Endothelial cell of umbilical vein (primary cell): ENCODE measurements at regions of chr1 and their contacts with region 1.

Region 1: DNA sequence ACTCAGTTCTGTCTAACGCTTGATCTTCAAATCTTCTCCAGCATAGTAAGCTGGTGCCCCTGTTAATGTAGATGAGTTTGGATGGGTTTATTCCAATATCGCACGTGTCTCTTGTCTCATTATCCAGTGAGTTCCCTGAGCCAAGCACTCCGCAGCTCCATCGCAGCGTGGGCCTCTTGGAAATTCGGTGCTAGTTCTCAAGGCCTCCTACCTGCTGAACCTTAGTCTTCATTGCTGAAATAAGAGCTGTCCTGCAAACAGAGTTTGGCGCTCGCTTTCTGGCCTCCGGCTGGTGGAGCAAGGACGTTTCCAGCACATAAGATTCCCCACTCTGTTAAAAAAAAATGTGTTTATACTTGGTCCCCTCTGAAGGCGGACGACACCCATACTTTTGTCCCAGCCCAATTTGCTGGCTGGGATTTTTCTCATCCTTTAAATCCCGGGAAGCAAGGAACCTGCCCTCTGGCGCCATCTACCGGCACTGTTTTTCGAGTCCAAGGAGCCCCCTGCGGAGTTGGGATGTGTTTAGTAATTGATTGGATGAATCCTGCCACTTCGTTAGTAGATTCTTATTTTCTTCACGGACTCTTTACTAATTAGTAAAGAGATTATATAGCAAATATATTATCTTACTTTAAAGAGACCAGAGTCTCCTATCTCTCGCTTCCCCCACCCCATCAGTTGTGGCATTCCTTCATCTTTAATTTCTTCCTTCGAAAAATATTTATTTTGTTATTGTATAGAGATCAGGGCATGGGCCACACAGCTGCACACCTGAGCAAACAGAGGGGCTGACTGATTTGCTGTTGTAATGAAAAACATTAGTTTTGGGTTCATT is 14.7 kb downstream of the JUN start:
- DNase-seq: peak; percentile 74
- H3K4me3 ChIP-seq: no peak overlapping the region
- H3K27ac ChIP-seq: no peak overlapping the region
- H3K4me1 ChIP-seq: peaks cover 34% of the 10 kb centered on the region
- H3K27me3 ChIP-seq: no peaks in the 10 kb centered on the region
- CTCF ChIP-seq: peak; percentile 71 to 81
- POLR2A ChIP-seq: no peak

Region 2: GRCh38 chr1:58515794-58516401 is 253.3 kb before region 1 on chr1:
- CTCF ChIA-PET with region 1: interaction called, 7 read pairs
- POLR2A ChIA-PET with region 1: no interaction called
- dilution Hi-C with region 1: no loop called
- intact Hi-C with region 1: loop called (anchors 1 kb)
- DNase-seq: peak; percentile 71
- H3K4me3 ChIP-seq: no peak overlapping the region
- H3K27ac ChIP-seq: no peak overlapping the region
- H3K4me1 ChIP-seq: no peaks in the 10 kb centered on the region
- H3K27me3 ChIP-seq: no peaks in the 10 kb centered on the region
- CTCF ChIP-seq: peak; percentile 37 to 58
- POLR2A ChIP-seq: no peak

Region 3: GRCh38 chr1:58699011-58699762 is 70.0 kb before region 1 on chr1:
- CTCF ChIA-PET with region 1: no interaction called
- POLR2A ChIA-PET with region 1: no interaction called
- dilution Hi-C with region 1: no loop called
- intact Hi-C with region 1: loop called (anchors 2 kb)
- DNase-seq: peak; percentile 63
- H3K4me3 ChIP-seq: peak overlapping the region; percentile 75 to 92 (median 86)
- H3K27ac ChIP-seq: peak overlapping the region; percentile 89
- H3K4me1 ChIP-seq: peaks cover 8% of the 10 kb centered on the region
- H3K27me3 ChIP-seq: no peaks in the 10 kb centered on the region
- CTCF ChIP-seq: no peak
- POLR2A ChIP-seq: peak; percentile 5

Region 4: GRCh38 chr1:58739856-58740466 is 29.2 kb before region 1 on chr1:
- CTCF ChIA-PET with region 1: interaction called, 48 read pairs
- POLR2A ChIA-PET with region 1: no interaction called
- dilution Hi-C with region 1: no loop called
- intact Hi-C with region 1: loop called (anchors 1 kb)
- DNase-seq: peak; percentile 73
- H3K4me3 ChIP-seq: no peak overlapping the region
- H3K27ac ChIP-seq: no peak overlapping the region
- H3K4me1 ChIP-seq: peaks cover 3% of the 10 kb centered on the region
- H3K27me3 ChIP-seq: no peaks in the 10 kb centered on the region
- CTCF ChIP-seq: peak; percentile 31 to 38
- POLR2A ChIP-seq: no peak

Region 5: GRCh38 chr1:58755468-58755872 is 13.7 kb before region 1 on chr1:
- CTCF ChIA-PET with region 1: interaction called, 31 read pairs
- POLR2A ChIA-PET with region 1: interaction called, 9 read pairs
- dilution Hi-C with region 1: no loop called
- intact Hi-C with region 1: no loop called
- DNase-seq: peak; percentile 99
- H3K4me3 ChIP-seq: peak overlapping the region in 1 of 3 experiments; percentile 18
- H3K27ac ChIP-seq: peak overlapping the region; percentile 96
- H3K4me1 ChIP-seq: peaks cover 40% of the 10 kb centered on the region
- H3K27me3 ChIP-seq: no peaks in the 10 kb centered on the region
- CTCF ChIP-seq: no peak
- POLR2A ChIP-seq: no peak

Region 6: DNA sequence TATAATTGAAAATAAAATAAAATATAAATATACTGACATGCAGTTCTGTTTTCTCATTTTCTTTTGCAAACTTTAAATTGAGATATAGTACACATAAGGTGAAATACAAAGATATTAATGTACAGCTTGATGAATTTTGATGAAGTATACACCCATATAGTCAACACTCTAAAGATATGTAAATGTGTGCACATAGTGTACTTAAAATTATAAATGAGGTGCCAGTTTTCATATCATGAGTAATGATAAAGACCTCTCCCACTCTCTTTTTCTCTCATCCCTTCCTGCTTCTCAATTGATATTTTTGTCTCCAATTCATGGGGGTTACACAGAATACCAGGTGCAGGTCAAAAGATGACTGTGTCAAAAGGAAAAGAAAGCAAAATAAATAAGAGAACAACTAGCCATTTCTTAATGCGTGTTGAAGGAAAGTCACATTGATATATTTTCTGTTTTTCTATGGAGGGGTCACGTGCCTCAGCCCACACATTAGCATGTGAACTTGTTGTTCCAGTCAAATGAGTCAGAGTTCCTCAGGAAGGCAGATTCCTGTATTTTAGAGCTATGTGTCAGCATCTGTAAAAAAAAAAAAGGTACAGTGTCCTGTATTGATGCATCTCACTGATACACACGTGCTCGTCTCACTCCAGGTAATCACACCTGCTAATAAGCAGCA is 981.3 kb after region 1 on chr1:
- CTCF ChIA-PET with region 1: interaction called, 4 read pairs
- POLR2A ChIA-PET with region 1: interaction called, 5 read pairs
- dilution Hi-C with region 1: no loop called
- intact Hi-C with region 1: loop called (anchors 2 kb)
- DNase-seq: peak; percentile 97
- H3K4me3 ChIP-seq: peak overlapping the region in 1 of 3 experiments; percentile 19
- H3K27ac ChIP-seq: peak overlapping the region; percentile 87
- H3K4me1 ChIP-seq: peaks cover 30% of the 10 kb centered on the region
- H3K27me3 ChIP-seq: no peaks in the 10 kb centered on the region
- CTCF ChIP-seq: no peak
- POLR2A ChIP-seq: no peak